CD8-positive, alpha-beta T cell (primary cell): ENCODE measurements at regions of chr4 and their contacts with region 1.

Region 1: DNA sequence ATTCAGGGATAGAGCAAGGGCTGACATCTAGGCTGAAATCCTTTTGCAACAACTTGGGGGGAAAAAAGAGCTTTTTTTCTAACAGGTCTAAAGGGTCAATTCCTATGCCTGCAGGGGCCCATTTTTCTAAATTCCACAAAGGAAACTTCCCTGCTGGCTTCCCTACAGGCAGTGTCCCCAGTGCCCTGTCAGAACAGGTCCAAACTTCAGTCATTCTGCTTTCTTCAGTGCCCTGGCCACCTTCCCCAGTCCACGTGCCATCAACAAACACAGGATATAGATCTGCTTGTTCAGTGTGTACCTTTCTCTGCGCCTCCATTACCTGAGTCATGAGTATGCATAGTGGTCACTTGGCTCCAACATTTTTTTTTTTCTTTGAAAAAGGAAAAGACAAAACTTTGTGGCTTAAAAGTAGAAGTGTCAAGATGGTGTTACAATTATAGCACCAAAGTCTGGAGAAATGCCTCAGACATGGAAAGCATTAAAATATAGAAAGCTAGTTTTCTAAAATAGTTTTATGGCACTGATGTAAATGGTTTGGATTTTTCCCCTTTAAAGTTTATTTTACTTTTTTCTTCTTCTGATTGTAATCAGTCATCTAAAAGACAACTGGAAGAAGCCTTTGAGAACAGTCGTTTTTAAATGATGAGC is 84.0 kb upstream of the JADE1 start:
- DNase-seq: no peak
- ATAC-seq: no peak
- H3K4me3 ChIP-seq: no peak overlapping the region
- H3K4me3 Mint-ChIP-seq: no peak overlapping the region
- H3K27ac ChIP-seq: no peak overlapping the region
- H3K27ac Mint-ChIP-seq: no peak overlapping the region
- H3K4me1 ChIP-seq: no peaks in the 10 kb centered on the region
- H3K4me1 Mint-ChIP-seq: no peaks in the 10 kb centered on the region
- H3K27me3 ChIP-seq: no peaks in the 10 kb centered on the region
- H3K27me3 Mint-ChIP-seq: no peaks in the 10 kb centered on the region
- CTCF ChIP-seq: no peak

Region 2: GRCh38 chr4:127055357-127055756 is 1670.2 kb before region 1 on chr4:
- CTCF ChIA-PET with region 1: no interaction called
- POLR2A ChIA-PET with region 1: no interaction called
- intact Hi-C with region 1: no loop called
- DNase-seq: no peak
- ATAC-seq: no peak
- H3K4me3 ChIP-seq: no peak overlapping the region
- H3K4me3 Mint-ChIP-seq: no peak overlapping the region
- H3K27ac ChIP-seq: no peak overlapping the region
- H3K27ac Mint-ChIP-seq: no peak overlapping the region
- H3K4me1 ChIP-seq: no peaks in the 10 kb centered on the region
- H3K4me1 Mint-ChIP-seq: no peaks in the 10 kb centered on the region
- H3K27me3 ChIP-seq: no peaks in the 10 kb centered on the region
- H3K27me3 Mint-ChIP-seq: no peaks in the 10 kb centered on the region
- CTCF ChIP-seq: no peak

Region 3: DNA sequence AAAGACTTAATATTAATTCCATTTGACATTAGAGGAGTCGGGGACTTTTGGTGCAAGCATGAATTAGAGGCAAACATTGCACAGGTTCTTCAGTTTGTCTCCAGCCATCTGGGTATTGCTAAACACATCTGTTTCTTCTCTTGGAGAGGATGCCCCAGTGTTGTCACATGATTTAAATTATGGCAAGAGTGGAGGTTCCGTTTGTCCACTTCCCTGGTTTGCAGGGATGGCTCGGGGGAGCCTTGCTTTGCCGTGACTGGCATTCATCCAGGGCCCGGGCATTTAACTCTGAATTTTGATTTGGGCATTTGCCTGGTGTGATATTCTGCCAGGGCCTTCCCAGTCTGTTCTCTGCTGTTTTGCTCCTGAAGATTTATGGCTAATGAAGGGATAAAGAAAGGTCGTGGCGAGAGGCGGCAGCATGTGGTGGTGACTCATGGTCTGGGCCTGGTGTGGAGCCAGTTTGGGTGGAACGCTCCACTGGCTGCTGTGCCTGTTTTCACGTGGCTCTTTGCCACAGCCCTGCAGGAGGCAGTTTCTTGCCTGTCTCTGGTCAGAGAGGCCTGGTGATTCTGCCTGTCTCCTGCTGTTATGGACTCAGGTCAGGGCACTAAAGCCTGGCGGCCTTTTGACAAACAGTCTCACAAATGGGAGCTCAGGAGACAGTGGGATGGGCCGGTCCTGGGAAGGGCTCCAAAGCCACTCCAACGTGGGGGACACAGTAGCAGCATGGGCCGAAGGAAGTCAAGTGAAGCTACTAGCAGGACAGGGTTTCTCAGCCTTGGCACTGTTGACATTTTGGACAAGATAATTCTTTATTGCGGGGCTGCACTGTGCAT is 338.6 kb before region 1 on chr4:
- CTCF ChIA-PET with region 1: no interaction called
- POLR2A ChIA-PET with region 1: no interaction called
- intact Hi-C with region 1: no loop called
- DNase-seq: no peak
- ATAC-seq: no peak
- H3K4me3 ChIP-seq: no peak overlapping the region
- H3K4me3 Mint-ChIP-seq: no peak overlapping the region
- H3K27ac ChIP-seq: no peak overlapping the region
- H3K27ac Mint-ChIP-seq: no peak overlapping the region
- H3K4me1 ChIP-seq: no peaks in the 10 kb centered on the region
- H3K4me1 Mint-ChIP-seq: no peaks in the 10 kb centered on the region
- H3K27me3 ChIP-seq: no peaks in the 10 kb centered on the region
- H3K27me3 Mint-ChIP-seq: no peaks in the 10 kb centered on the region
- CTCF ChIP-seq: no peak

Region 4: DNA sequence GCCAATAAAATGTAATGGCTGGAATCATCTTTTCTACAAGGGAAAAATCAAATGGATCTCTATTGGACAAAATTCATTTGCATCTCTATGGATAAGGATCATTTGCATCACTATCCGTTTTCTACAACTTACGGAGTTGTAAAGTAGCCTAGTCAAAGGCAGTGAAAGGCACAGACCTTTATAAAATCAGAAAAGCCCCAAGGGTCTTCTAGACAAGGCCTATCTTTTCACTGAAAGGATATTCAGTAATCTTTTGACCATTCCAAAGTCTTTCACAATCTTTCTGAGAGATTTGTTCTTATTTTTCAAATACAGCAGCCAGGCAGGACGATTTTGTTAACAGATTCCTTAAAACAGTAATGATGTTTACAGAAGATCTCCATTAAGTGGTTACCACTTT is 35.5 kb before region 1 on chr4:
- CTCF ChIA-PET with region 1: no interaction called
- POLR2A ChIA-PET with region 1: no interaction called
- intact Hi-C with region 1: no loop called
- DNase-seq: no peak
- ATAC-seq: no peak
- H3K4me3 ChIP-seq: no peak overlapping the region
- H3K4me3 Mint-ChIP-seq: no peak overlapping the region
- H3K27ac ChIP-seq: no peak overlapping the region
- H3K27ac Mint-ChIP-seq: no peak overlapping the region
- H3K4me1 ChIP-seq: no peaks in the 10 kb centered on the region
- H3K4me1 Mint-ChIP-seq: no peaks in the 10 kb centered on the region
- H3K27me3 ChIP-seq: no peaks in the 10 kb centered on the region
- H3K27me3 Mint-ChIP-seq: peaks cover 16% of the 10 kb centered on the region
- CTCF ChIP-seq: no peak

Region 5: GRCh38 chr4:128735714-128736113 is 10.2 kb after region 1 on chr4:
- CTCF ChIA-PET with region 1: no interaction called
- POLR2A ChIA-PET with region 1: no interaction called
- intact Hi-C with region 1: loop called in 1 of 2 experiments (anchors 1 kb)
- DNase-seq: no peak
- ATAC-seq: no peak
- H3K4me3 ChIP-seq: no peak overlapping the region
- H3K4me3 Mint-ChIP-seq: no peak overlapping the region
- H3K27ac ChIP-seq: no peak overlapping the region
- H3K27ac Mint-ChIP-seq: no peak overlapping the region
- H3K4me1 ChIP-seq: no peaks in the 10 kb centered on the region
- H3K4me1 Mint-ChIP-seq: no peaks in the 10 kb centered on the region
- H3K27me3 ChIP-seq: no peaks in the 10 kb centered on the region
- H3K27me3 Mint-ChIP-seq: no peaks in the 10 kb centered on the region
- CTCF ChIP-seq: no peak